Psoas muscle (tissue), 8 donors: ENCODE measurements at regions of chr11 and their contacts with region 1.

Region 1: DNA sequence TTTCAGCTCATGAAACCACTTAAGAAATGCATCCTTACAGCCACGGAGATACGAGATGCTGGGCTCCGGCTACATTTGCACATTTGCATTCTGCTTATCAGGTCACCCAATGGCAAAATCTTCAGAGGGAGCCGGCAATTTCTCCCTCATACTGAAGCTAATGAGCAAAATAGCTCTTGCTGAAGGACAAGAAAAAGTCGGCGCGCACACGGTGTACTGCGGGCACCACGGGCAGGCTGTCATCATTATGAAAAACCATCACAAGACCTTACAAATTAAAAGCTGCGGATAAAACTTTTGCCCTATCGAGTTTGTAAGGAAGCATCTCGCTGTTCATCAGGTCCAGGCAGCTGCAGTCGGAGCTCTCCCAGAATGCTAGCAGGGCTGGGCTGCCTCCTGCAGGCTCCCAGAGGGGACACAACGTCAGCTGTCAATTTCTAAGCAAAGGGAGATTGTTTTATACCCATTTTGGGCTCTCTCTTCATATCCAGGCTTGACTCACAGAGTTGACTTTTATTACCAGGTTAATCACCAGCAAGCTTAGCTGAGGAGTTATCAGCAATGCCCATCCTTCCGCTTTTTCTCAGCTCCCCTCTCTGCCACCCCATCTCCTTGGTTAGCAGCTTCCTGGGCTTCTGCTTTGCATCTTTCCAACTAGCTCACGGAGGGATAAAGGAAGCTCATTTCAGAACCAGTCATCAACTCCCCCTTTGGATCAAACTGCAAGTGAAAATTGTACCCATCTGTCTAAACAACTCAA is 375.1 kb downstream of the OPCML start:
- DNase-seq: no peak
- ATAC-seq: no peak
- H3K4me3 ChIP-seq: no peak overlapping the region
- H3K27ac ChIP-seq: no peak overlapping the region
- H3K4me1 ChIP-seq: no peaks in the 10 kb centered on the region
- H3K27me3 ChIP-seq: peaks cover 0 to 24% (median 9%) of the 10 kb centered on the region in 3 donors
- CTCF ChIP-seq: no peak

Region 2: DNA sequence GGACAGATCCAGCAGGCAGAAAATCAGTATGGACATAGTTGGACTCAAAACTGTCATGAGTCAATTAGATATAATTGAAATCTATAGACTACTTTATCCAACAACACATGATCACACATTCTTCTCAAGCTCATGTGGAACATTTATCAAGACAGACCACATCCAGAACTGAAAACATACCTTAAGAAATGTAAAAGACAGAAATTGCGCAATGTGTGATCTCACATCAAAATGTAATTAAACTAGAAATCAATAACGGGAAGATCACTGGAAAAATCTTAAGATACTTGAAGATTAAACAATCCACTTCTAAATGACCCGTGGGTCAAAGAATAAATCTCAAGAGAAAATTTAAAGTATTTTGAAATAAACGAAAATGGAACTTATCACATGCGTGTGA is 60.2 kb before region 1 on chr11:
- intact Hi-C with region 1: loop called in 1 of 2 experiments (anchors 10 kb)
- DNase-seq: no peak
- ATAC-seq: no peak
- H3K4me3 ChIP-seq: no peak overlapping the region
- H3K27ac ChIP-seq: no peak overlapping the region
- H3K4me1 ChIP-seq: no peaks in the 10 kb centered on the region
- H3K27me3 ChIP-seq: peaks cover 0 to 3% (median 0%) of the 10 kb centered on the region in 3 donors
- CTCF ChIP-seq: no peak

Region 3: GRCh38 chr11:133118563-133119268 is 38.5 kb before region 1 on chr11:
- intact Hi-C with region 1: no loop called
- DNase-seq: no peak
- ATAC-seq: no peak
- H3K4me3 ChIP-seq: no peak overlapping the region
- H3K27ac ChIP-seq: no peak overlapping the region
- H3K4me1 ChIP-seq: no peaks in the 10 kb centered on the region
- H3K27me3 ChIP-seq: no peaks in the 10 kb centered on the region
- CTCF ChIP-seq: no peak